Gastrocnemius medialis (tissue), 4 donors: ENCODE measurements at regions of chr19 and their contacts with region 1.

Region 1: DNA sequence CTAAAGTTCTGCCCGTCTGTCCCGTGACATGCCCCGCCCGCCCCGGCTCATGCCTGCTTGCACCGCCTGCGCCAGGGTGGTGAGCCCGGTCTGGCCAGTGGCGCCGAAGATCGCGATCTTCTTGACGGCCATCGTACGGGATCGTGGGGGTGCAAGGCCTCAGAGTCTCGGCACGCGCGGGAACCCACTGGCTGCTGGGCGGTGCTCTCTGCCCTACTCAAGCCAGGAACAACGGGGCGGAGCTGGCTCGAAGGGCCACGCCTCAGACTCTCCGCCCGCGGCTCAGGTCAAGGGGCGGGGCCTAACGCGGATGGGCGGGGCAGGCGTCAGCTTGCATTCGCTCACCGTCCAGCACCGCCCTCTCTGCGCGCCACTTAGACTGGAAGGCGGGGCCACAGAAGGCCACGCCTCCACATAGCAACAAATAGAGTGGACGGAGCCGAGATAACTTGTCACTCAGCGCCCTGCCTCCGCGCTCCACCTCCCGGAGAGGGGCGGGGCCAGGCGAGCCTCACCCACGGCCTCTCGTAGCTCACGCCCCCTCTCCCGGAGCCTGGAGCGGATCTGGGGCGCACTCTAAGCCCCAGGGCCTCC is at the start of gene BLVRB:
- DNase-seq: peak; percentile 99 to 100
- ATAC-seq: peak; percentile 77 to 86
- H3K4me3 ChIP-seq: peak within 1 kb of the TSS; percentile 81 to 100 (median 88)
- H3K27ac ChIP-seq: peak within 1 kb of the TSS; percentile 97 to 100 (median 98)
- H3K4me1 ChIP-seq: peaks cover 5 to 22% of the 10 kb centered on the region in 2 donors
- H3K27me3 ChIP-seq: no peaks in the 10 kb centered on the region
- CTCF ChIP-seq: no peak
- POLR2A ChIP-seq: peak; percentile 93 to 95
- total RNA-seq, gene BLVRB: 254 to 679 (median 280) TPM

Region 2: GRCh38 chr19:40285353-40286234 is 180.1 kb before region 1 on chr19:
- in situ Hi-C with region 1: no loop called
- intact Hi-C with region 1: loop called (anchors 5 kb)
- DNase-seq: peak; percentile 99 to 100
- ATAC-seq: peak; percentile 88 to 90
- H3K4me3 ChIP-seq: peak overlapping the region; percentile 69 to 94 (median 77)
- H3K27ac ChIP-seq: peak overlapping the region; percentile 89 to 99 (median 95)
- H3K4me1 ChIP-seq: peaks cover 44 to 48% of the 10 kb centered on the region in 2 donors
- H3K27me3 ChIP-seq: no peaks in the 10 kb centered on the region
- CTCF ChIP-seq: no peak
- POLR2A ChIP-seq: peak in 1 of 2 donors; percentile 48

Region 3: DNA sequence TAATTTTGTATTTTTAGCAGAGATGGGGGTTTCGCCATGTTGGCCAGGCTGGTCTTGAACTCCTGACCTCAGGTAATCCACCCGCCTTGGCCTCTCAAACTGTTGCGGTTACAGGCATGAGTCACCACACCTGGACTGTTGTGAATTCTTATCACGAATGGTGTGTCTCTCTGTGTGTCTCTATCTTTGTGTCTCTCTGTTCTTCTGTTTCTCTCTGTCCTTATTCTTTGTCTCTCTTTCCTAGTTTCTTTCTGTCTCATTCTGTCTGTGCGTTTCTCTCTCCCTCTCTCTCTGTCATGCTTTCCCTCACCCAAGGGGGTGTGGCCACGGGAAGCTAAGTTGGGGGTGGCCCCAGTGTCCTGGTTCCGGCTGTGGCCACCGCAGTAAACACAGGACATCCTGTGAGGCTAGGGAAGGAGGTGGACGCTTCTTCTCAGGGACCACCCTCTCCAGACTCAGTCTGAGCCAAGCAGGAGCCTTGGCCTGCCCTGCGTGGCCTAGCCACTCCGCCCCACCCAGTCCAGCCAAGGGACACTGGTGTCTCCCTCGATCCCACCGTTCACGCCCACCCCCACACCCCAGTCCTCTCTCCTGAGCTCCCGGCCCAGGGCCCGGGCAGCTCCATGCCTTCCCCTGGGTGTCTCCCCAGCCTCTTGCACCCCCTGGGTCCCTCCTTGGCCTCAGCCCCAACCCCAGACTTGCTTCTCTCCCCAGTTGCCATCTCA is 48.6 kb before region 1 on chr19:
- in situ Hi-C with region 1: loop called in 1 of 4 experiments (anchors 10 kb)
- intact Hi-C with region 1: loop called (anchors 1 kb)
- DNase-seq: peak in 1 of 2 donors; percentile 56
- ATAC-seq: peak in 1 of 2 donors; percentile 17
- H3K4me3 ChIP-seq: no peak overlapping the region
- H3K27ac ChIP-seq: peak overlapping the region; percentile 75 to 100 (median 94)
- H3K4me1 ChIP-seq: peaks cover 28 to 33% of the 10 kb centered on the region in 2 donors
- H3K27me3 ChIP-seq: no peaks in the 10 kb centered on the region
- CTCF ChIP-seq: no peak
- POLR2A ChIP-seq: peak; percentile 35 to 61

Region 4: DNA sequence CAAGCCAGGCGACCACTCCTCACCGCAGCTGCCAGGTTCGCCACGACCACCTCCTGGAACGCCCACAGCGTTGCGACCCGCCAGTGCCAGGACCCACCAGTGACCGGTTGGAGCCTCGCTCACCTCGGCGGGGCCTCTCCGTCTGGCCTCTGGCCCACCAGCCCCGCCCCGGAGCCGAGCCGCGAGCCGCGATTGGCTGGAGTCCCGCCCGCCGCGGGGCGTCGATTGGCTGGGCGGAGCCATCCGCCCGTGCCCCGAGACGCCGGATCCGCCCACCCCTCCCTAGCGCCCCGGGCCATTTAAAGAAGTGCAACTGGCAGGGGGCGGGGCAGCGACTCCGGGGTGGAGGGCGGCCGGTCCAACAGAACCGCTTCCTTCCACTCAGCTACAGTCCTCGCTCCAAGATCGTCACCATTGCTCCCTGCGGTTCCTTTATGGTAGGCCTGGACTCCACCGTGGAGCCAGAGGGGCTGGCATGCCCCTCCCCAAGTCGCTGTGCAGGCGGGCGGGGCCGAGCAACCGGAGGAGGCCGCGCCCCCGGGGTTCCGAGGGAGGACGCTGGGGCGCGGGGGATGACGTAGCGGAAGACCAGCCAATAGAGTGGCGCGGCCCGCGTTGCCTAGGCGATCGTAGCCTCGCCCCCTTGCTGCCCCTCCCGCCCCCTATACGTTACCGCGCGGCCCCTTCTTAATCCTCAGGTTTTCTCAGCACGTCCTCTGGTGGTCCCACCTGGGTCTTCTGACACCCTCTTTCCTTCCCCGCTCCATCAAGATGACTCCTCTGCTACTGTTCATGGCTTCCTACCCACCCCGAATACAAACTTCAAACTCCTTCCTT is 21.2 kb before region 1 on chr19 and contains the start of gene SERTAD3:
- in situ Hi-C with region 1: no loop called
- intact Hi-C with region 1: loop called (anchors 1 kb)
- DNase-seq: peak; percentile 95 to 97
- ATAC-seq: peak; percentile 72 to 73
- H3K4me3 ChIP-seq: peak within 1 kb of the TSS; percentile 77 to 98 (median 92)
- H3K27ac ChIP-seq: peak within 1 kb of the TSS; percentile 96 to 99 (median 99)
- H3K4me1 ChIP-seq: peaks cover 15 to 24% of the 10 kb centered on the region in 2 donors
- H3K27me3 ChIP-seq: no peaks in the 10 kb centered on the region
- CTCF ChIP-seq: peak in 2 of 5 experiments; percentile 16 to 22
- POLR2A ChIP-seq: peak; percentile 99
- total RNA-seq, gene SERTAD3: 12.7 to 24.4 (median 18.1) TPM

Region 5: GRCh38 chr19:40798223-40798996 is 332.8 kb after region 1 on chr19:
- in situ Hi-C with region 1: no loop called
- intact Hi-C with region 1: loop called (anchors 5 kb)
- DNase-seq: peak; percentile 100
- ATAC-seq: peak; percentile 17 to 83
- H3K4me3 ChIP-seq: peak overlapping the region; percentile 55 to 96 (median 63)
- H3K27ac ChIP-seq: peak overlapping the region; percentile 94 to 96 (median 96)
- H3K4me1 ChIP-seq: peaks cover 36 to 42% of the 10 kb centered on the region in 2 donors
- H3K27me3 ChIP-seq: no peaks in the 10 kb centered on the region
- CTCF ChIP-seq: peak; percentile 34 to 51 (median 49)
- POLR2A ChIP-seq: no peak